AG04449 (cell line): ENCODE measurements at regions of chr10 and their contacts with region 1.

Region 1: GRCh38 chr10:48608279-48608681 is 3.4 kb upstream of the ARHGAP22 start:
- DNase-seq: no peak
- H3K4me3 ChIP-seq: no peak overlapping the region
- CTCF ChIP-seq: peak; percentile 77

Region 2: GRCh38 chr10:48493083-48493871 is 115.0 kb before region 1 on chr10:
- CTCF ChIA-PET with region 1: no interaction called
- POLR2A ChIA-PET with region 1: no interaction called
- DNase-seq: no peak
- H3K4me3 ChIP-seq: no peak overlapping the region
- CTCF ChIP-seq: no peak

Region 3: GRCh38 chr10:48523820-48524758 is 84.2 kb before region 1 on chr10:
- CTCF ChIA-PET with region 1: interaction called, 14 read pairs
- POLR2A ChIA-PET with region 1: no interaction called
- DNase-seq: no peak
- H3K4me3 ChIP-seq: peak overlapping the region; percentile 57
- CTCF ChIP-seq: peak; percentile 48

Region 4: GRCh38 chr10:48577158-48577557 is 31.1 kb before region 1 on chr10:
- CTCF ChIA-PET with region 1: interaction called, 14 read pairs
- POLR2A ChIA-PET with region 1: interaction called, 3 read pairs
- DNase-seq: no peak
- H3K4me3 ChIP-seq: no peak overlapping the region
- CTCF ChIP-seq: no peak

Region 5: GRCh38 chr10:48623607-48624132 is 15.4 kb after region 1 on chr10:
- CTCF ChIA-PET with region 1: interaction called, 50 read pairs
- POLR2A ChIA-PET with region 1: interaction called, 3 read pairs
- DNase-seq: no peak
- H3K4me3 ChIP-seq: no peak overlapping the region
- CTCF ChIP-seq: no peak

Region 6: DNA sequence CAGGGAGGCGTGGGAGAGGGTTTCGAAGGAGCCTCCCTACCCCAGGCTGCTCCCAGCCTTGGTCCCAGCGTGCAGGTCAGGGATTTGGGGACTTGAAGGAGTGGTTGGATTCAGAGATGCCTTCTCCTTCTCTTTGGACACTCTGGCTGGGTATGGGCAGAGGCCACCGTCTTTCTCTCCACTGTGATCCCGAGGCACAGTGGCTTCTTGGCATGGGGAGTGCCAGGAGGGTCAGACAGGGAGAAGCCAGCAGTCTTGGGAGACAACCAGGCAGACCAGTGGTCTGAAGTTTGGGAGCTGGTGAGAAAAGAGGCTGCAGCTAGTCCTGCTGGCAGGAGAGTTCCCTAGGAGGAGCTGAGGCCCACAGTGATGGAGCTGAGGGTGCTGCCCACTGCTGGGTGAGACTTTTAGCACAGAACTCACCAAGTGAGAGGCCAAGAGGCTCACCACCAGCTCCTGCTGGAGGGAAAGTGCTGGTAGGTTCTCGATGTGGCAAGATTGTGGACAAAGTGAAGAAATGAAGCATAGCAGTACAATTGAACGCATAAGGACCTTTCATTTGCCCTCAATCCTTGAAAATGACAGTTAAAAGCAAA is 41.2 kb after region 1 on chr10:
- CTCF ChIA-PET with region 1: interaction called, 124 read pairs
- POLR2A ChIA-PET with region 1: no interaction called
- DNase-seq: no peak
- H3K4me3 ChIP-seq: no peak overlapping the region
- CTCF ChIP-seq: peak; percentile 37